Left cardiac atrium (tissue), 4 donors: ENCODE measurements at regions of chr16 and their contacts with region 1.

Region 1: GRCh38 chr16:77171745-77172635 is 19.0 kb upstream of the MON1B start:
- DNase-seq: no peak
- ATAC-seq: peak; percentile 62 to 65

Region 2: DNA sequence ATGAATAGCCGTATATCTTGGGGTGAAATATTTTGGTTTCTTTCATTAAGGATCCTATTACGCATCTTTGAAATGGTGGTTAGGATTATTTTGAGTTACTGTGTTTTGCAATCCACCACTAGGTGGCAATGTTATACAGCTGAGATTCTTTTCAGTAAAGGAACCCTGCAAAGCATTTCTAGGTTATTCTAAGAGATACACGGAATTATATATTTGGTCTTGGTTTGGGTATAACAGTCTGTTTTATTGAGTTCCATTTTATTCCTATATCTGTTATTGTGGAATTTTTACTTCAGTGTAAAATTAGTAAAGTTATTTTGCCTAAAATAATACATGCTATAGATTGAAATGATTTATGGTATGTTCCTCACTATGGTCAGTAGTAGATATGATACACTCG is 1382.8 kb before region 1 on chr16:
- intact Hi-C with region 1: loop called (anchors 2 to 5 kb)
- DNase-seq: no peak
- ATAC-seq: no peak

Region 3: GRCh38 chr16:76278980-76279379 is 893.0 kb before region 1 on chr16:
- intact Hi-C with region 1: loop called in 1 of 2 experiments (anchors 2 kb)
- DNase-seq: no peak
- ATAC-seq: peak in 1 of 2 donors; percentile 30

Region 4: GRCh38 chr16:76668207-76668725 is 503.7 kb before region 1 on chr16:
- intact Hi-C with region 1: loop called in 1 of 2 experiments (anchors 10 kb)
- DNase-seq: no peak
- ATAC-seq: no peak

Region 5: GRCh38 chr16:77059446-77059845 is 112.5 kb before region 1 on chr16:
- intact Hi-C with region 1: loop called in 1 of 2 experiments (anchors 10 kb)
- DNase-seq: no peak
- ATAC-seq: no peak

Region 6: GRCh38 chr16:77090062-77090461 is 81.9 kb before region 1 on chr16:
- intact Hi-C with region 1: no loop called
- DNase-seq: no peak
- ATAC-seq: peak; percentile 44 to 99

Region 7: GRCh38 chr16:77117707-77118106 is 54.3 kb before region 1 on chr16:
- intact Hi-C with region 1: no loop called
- DNase-seq: no peak
- ATAC-seq: peak; percentile 72 to 92

Region 8: DNA sequence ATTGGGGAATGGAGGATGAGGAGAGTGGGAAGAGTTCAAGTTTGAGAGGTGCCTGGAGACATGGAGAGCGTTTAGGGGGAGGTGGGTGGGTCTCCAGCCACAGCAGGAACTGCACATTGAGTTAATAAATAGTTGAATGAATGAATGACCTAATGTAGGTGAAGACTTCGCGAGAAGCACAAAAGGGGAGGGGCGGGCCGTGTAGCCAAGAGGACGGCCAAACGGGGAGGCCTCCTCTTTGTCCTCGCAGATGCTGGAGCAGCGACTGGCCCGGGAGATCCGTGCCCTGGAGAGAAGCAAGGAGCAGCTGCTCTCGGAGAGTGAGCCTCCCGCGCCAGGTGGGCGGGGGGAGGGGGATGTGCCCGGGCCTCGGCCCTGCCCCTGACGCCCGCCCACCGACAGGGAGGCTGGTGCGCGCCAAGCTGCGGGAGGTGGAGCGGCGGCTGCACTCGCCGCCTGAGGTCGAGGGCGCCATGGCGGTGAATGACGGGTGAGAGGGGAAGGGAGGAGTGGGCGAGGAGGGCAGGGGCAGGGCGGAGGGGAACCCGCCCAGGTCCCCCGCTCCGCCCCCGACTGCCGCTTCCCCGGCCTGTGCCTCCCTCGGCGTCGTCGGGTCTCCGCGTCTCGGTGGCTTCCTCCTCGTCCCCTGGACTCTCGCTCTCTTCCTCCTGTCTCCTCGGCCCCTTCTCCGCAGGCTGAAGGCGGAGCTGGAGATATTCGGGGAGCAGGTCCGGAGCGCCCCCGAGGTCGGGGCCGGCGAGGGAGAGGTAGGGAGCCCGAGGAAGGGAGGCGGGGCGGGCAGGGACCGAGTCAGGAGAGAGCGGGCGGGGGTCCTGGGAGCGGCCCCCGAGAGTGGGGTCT is 40.1 kb after region 1 on chr16:
- intact Hi-C with region 1: no loop called
- DNase-seq: peak; percentile 67
- ATAC-seq: peak; percentile 62 to 77

Region 9: GRCh38 chr16:77236063-77236511 is 64.1 kb after region 1 on chr16:
- intact Hi-C with region 1: no loop called
- DNase-seq: peak; percentile 87
- ATAC-seq: peak; percentile 97 to 98